K562 (cell line): ENCODE measurements at regions of chr11 and their contacts with region 1.

Region 1: GRCh38 chr11:43944761-43945311 is 2.4 kb downstream of the C11orf96 start:
- DNase-seq: peak; percentile 81 to 87 (median 82)
- ATAC-seq: peak; percentile 78
- H3K4me3 ChIP-seq: no peak overlapping the region
- H3K27ac ChIP-seq: no peak overlapping the region
- H3K4me1 ChIP-seq: peaks cover 22 to 36% of the 10 kb centered on the region in 2 experiments; a peak in 4 of 5 replicates
- H3K27me3 ChIP-seq: peaks cover 10 to 22% of the 10 kb centered on the region in 2 experiments; a peak in 4 of 5 replicates
- CTCF ChIP-seq: peak; percentile 80 to 92 (median 83)
- EP300 ChIP-seq: no peak
- POLR2A ChIP-seq: no peak
- RAD21 ChIP-seq: peak; percentile 79 to 89

Region 2: GRCh38 chr11:43825217-43825816 is 119.5 kb before region 1 on chr11:
- CTCF ChIA-PET with region 1: interaction called, 5 read pairs
- POLR2A ChIA-PET with region 1: no interaction called
- in situ Hi-C with region 1: no loop called
- intact Hi-C with region 1: loop called (anchors 10 kb)
- DNase-seq: peak; percentile 13 to 56 (median 16)
- ATAC-seq: peak; percentile 80
- H3K4me3 ChIP-seq: no peak overlapping the region
- H3K27ac ChIP-seq: no peak overlapping the region
- H3K4me1 ChIP-seq: no peaks in the 10 kb centered on the region
- H3K27me3 ChIP-seq: no peaks in the 10 kb centered on the region
- CTCF ChIP-seq: peak; percentile 56 to 77 (median 75); a peak in 5 of 6 replicates
- EP300 ChIP-seq: no peak
- POLR2A ChIP-seq: no peak
- RAD21 ChIP-seq: peak; percentile 51 to 65

Region 3: DNA sequence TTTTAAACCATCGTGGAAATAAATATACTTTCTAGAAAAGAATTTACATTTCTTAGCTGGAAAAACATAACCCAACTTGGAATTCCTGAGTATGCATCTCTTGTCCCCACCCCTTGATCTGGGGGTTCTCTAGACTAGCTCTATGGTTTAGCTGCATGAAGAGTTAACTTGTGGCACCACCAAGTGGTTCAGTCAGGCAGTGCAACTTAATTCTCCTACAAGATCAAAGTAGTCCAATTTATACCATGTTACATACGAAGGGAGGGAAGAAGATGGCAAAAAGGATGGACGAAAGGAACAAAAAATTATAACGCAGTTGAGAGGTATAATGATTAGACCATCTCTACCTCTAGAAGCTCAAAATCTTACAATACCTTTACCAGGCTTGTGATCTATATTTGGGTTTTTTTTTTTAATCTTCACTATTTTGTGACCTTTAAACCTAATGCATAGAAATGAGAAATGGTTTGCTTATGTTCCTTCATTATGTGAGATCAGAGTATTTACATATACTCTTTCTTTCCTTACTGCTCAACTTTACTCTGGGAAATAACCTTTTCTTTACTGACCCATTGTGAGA is 92.7 kb before region 1 on chr11:
- CTCF ChIA-PET with region 1: no interaction called
- POLR2A ChIA-PET with region 1: no interaction called
- in situ Hi-C with region 1: no loop called
- intact Hi-C with region 1: no loop called
- DNase-seq: peak; percentile 62 to 76 (median 66)
- ATAC-seq: peak; percentile 96
- H3K4me3 ChIP-seq: no peak overlapping the region
- H3K27ac ChIP-seq: no peak overlapping the region
- H3K4me1 ChIP-seq: no peaks in the 10 kb centered on the region
- H3K27me3 ChIP-seq: peaks cover 0 to 4% of the 10 kb centered on the region in 2 experiments; a peak in 2 of 5 replicates
- CTCF ChIP-seq: peak; percentile 72 to 84 (median 75)
- EP300 ChIP-seq: no peak
- POLR2A ChIP-seq: no peak
- RAD21 ChIP-seq: peak; percentile 80 to 89

Region 4: DNA sequence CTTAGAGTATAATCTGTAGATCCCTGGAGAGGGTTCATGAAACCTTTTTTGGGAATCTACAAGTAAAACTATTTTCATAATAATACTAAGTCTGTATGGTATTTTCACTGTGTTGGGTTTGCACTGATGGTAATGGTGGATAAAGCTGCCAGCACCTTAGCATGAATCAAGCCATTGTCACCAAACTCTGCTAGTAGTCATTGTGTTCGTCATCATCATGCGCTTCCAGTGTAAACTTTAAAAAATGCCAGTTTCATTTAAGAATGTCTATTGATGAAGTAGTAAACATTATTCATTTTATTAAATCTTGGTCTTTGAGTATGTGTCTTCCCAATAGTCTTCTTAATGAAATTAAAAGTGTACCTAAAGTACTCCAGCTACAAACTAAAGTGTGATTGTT is 49.2 kb before region 1 on chr11:
- CTCF ChIA-PET with region 1: interaction called, 22 read pairs
- POLR2A ChIA-PET with region 1: interaction called, 6 read pairs
- in situ Hi-C with region 1: no loop called
- intact Hi-C with region 1: loop called (anchors 1 kb)
- DNase-seq: no peak
- ATAC-seq: no peak
- H3K4me3 ChIP-seq: no peak overlapping the region
- H3K27ac ChIP-seq: no peak overlapping the region
- H3K4me1 ChIP-seq: no peaks in the 10 kb centered on the region
- H3K27me3 ChIP-seq: no peaks in the 10 kb centered on the region
- CTCF ChIP-seq: no peak
- EP300 ChIP-seq: no peak
- POLR2A ChIP-seq: no peak
- RAD21 ChIP-seq: no peak

Region 5: DNA sequence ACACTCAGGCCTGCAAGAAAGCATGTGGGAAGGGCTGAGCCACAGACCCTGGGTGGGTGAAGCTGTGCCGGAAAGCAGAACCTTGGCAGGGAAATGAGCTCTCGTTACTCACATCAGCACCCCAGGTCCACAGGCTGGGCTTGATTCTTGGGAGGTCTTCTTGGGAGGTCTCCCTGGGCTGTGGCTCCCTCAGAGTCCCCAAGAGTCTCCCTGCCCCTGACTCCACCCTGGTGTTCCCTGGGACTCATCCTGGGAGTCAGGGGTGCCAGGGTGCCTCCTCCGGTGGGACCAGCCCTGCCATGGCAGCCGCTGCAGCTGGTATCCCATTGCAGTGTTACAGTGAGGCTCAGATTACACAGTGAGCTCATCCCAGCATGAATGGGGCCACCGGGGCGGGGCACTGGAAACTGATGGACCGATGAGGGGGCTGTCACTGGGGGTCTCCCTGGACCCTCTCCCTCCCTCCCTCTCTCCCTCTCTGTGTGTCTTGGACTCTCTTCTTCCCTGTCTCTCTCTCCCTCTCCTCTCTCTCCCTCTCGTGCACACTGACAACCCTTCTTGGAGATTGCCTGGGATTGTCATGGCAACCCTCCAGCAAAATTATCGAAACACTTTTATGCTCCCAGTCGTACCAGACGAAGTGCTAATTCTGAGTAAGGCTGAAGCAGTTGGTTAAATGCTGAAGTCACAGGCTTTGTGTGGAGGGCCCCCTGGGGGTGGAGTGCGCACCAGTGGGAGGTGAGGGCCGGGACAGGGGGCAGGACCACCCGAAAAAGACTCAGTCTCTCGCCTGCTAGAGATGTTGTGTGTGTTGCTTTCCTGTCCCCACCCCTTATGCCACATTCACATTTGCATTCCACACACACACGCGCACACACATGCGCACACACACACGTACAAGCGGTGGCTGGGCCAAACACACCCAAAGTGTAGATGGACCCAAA is 11.0 kb before region 1 on chr11:
- CTCF ChIA-PET with region 1: no interaction called
- POLR2A ChIA-PET with region 1: interaction called, 21 read pairs
- in situ Hi-C with region 1: no loop called
- intact Hi-C with region 1: no loop called
- DNase-seq: no peak
- ATAC-seq: no peak
- H3K4me3 ChIP-seq: no peak overlapping the region
- H3K27ac ChIP-seq: no peak overlapping the region
- H3K4me1 ChIP-seq: peaks cover 8 to 13% of the 10 kb centered on the region in 2 experiments; a peak in 3 of 5 replicates
- H3K27me3 ChIP-seq: peaks cover 0 to 5% of the 10 kb centered on the region in 2 experiments; a peak in 1 of 5 replicates
- CTCF ChIP-seq: peak in 2 of 3 experiments; percentile 23 to 33; a peak in 1 of 6 replicates
- EP300 ChIP-seq: no peak
- POLR2A ChIP-seq: no peak
- RAD21 ChIP-seq: peak in 1 of 2 experiments; percentile 12; a peak in 1 of 4 replicates

Region 6: DNA sequence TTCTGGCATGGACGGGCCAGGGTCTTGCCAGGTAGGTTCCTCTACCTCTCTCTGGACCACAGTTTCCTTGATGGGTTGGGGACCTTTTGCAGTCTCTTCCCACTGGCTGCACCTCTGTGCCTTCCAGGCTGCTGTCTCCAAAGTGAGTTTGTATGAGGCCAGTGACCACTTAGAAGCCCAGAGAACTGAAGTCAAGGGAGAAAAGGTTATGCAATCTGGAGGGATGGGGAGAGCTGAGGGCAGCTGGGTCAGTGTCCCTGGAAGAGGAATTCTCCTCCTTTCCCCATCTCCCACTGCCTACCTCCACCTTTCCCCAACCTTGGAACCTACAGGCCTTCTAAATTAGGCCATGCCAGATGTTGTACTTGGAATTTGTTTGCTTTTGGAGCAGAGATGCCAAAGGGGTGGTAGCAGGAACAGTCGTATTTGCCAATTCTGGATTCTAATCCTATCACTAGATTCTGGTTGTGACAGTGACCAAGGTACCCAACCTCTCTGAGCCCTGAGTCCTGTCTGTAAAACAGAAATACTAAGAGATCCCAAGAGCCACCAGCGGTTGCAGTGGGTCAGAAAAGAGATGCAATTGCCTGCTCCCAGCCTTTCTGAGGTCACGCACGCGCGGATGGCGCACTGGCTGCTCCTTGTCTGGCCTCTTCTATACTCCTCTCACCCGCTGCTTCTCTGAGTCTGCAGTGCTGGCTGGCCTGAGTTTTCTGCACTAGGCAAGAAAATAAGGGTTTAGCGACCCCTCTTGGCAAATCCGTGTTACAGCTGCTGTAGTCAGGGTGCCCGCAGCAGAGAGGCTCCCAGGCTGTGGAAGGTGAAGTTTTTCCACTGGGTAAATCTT is 92.2 kb after region 1 on chr11:
- CTCF ChIA-PET with region 1: no interaction called
- POLR2A ChIA-PET with region 1: interaction called, 4 read pairs
- in situ Hi-C with region 1: loop called (anchors 5 kb)
- intact Hi-C with region 1: loop called (anchors 1 kb)
- DNase-seq: peak; percentile 47 to 79 (median 63)
- ATAC-seq: peak; percentile 98
- H3K4me3 ChIP-seq: no peak overlapping the region
- H3K27ac ChIP-seq: no peak overlapping the region
- H3K4me1 ChIP-seq: peaks cover 0 to 2% of the 10 kb centered on the region in 2 experiments; a peak in 2 of 5 replicates
- H3K27me3 ChIP-seq: peaks cover 6 to 18% of the 10 kb centered on the region in 2 experiments; a peak in 4 of 5 replicates
- CTCF ChIP-seq: peak; percentile 87 to 92 (median 87)
- EP300 ChIP-seq: no peak
- POLR2A ChIP-seq: no peak
- RAD21 ChIP-seq: peak; percentile 82 to 88

Region 7: GRCh38 chr11:44065841-44066731 is 121.2 kb after region 1 on chr11 and contains the start of gene ACCS:
- CTCF ChIA-PET with region 1: no interaction called
- POLR2A ChIA-PET with region 1: no interaction called
- in situ Hi-C with region 1: no loop called
- intact Hi-C with region 1: loop called (anchors 10 kb)
- DNase-seq: peak; percentile 89 to 95 (median 90)
- ATAC-seq: peak; percentile 97
- H3K4me3 ChIP-seq: peak within 1 kb of the TSS; percentile 55
- H3K27ac ChIP-seq: peak within 1 kb of the TSS; percentile 72
- H3K4me1 ChIP-seq: peaks cover 10 to 20% of the 10 kb centered on the region in 2 experiments; a peak in 4 of 5 replicates
- H3K27me3 ChIP-seq: no peaks in the 10 kb centered on the region
- CTCF ChIP-seq: peak; percentile 86 to 88 (median 87)
- EP300 ChIP-seq: peak; percentile 33
- POLR2A ChIP-seq: peak; percentile 91
- RAD21 ChIP-seq: 0 out of 4 replicates have a peak, but pooled peaks of 1 of the 2 experiments have one; percentile 18
- polyA plus RNA-seq, gene ACCS: 4.2 to 6.3 TPM